MCF 10A (cell line): ENCODE measurements at regions of chr12 and their contacts with region 1.

Region 1: DNA sequence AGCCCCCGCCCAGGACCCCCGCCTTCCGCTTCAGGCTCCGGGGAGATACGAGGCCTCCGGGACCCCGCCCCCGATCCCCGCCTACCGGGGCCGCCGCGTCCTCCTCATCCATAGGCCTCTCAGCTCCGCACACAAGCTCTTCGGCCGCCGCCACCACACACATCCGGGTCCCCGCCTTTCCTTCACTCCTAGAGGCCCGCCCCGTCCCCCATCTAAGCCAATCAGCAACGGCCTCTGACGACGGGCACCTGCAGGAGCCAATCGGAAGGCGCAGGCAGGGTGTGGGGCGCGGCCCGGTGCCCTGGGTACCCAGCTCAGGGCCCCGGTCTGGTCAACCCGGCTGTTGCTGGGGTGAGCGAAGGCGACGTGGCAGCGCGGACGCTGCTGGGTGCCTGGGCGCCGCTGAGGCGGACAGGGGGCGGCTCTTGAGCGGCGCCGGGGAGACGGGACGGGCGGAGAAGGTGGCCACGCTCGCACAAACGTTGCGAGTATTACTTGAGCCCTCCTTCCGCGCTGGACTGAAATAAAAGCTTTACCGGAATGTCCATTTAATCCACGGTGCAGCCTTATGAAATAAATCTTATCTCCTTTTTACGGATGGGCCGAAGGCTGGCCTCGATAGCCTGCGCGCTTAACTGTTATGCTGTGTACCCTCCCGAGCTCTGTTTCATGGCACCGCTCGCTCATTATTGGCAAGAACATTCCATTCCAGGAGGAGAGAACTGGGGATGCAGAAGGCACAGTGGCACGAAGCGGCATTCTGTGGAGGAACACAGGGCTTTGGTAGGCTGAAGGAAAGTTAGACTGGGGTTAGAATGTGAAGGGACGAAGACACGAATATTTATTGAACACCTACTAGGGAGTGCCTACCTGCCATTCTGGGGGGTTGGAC is at the start of gene SPRYD3:
- DNase-seq: peak; percentile 97
- H3K4me3 Mint-ChIP-seq: peak within 1 kb of the TSS; percentile 73
- H3K27ac Mint-ChIP-seq: peak within 1 kb of the TSS; percentile 61
- H3K4me1 Mint-ChIP-seq: peaks cover 23% of the 10 kb centered on the region
- H3K27me3 Mint-ChIP-seq: no peaks in the 10 kb centered on the region
- CTCF ChIP-seq: no peak
- total RNA-seq, gene SPRYD3: 35.2 and 39.9 TPM in 2 replicates

Region 2: GRCh38 chr12:52949413-52950331 is 129.8 kb before region 1 on chr12:
- CTCF ChIA-PET with region 1: no interaction called
- POLR2A ChIA-PET with region 1: no interaction called
- intact Hi-C with region 1: no loop called
- DNase-seq: peak; percentile 98
- H3K4me3 Mint-ChIP-seq: peak overlapping the region; percentile 95
- H3K27ac Mint-ChIP-seq: peak overlapping the region; percentile 86
- H3K4me1 Mint-ChIP-seq: peaks cover 57% of the 10 kb centered on the region
- H3K27me3 Mint-ChIP-seq: no peaks in the 10 kb centered on the region
- CTCF ChIP-seq: no peak

Region 3: DNA sequence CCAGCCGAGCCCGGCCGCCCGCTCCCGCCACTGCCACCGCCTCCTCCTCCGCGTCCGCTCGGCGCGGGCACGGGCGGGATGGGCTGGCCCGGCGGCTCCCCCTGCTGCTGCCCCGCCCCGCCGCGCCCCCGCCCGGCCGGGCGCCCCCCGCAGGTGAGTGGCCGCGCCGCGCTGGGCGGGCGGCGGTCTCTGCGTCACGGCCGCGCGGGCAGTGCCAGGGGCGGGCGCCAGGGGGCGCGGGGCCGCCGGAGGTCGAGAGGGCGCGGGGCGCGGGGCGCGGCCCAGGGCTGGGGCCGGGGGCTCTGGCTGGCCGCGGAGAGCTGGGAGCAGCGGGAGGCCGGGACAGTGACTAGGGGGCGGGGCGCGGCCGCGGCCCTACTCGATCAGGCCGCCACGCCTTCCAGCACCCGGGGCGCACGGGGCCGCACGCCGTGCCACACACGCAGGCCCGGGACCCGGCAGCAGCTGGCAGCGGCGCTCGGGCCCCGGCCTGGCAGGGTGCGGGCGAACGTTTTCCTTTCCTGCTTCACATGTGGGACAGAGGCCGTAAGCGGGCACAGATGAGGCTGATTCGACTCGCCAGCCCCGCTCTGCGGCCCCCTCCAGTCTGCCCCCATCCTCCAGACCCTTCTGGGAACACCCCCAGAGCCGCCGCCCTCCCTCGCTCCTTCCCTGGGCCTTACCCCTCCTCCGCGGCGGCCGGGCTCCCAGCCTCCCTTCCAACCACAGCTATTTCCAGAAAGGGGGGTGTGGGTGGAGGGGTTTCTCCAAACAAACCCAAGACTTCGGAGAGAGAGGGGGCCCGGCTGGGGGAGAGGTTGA is 32.0 kb before region 1 on chr12:
- CTCF ChIA-PET with region 1: interaction called, 3 read pairs
- POLR2A ChIA-PET with region 1: interaction called, 19 read pairs
- intact Hi-C with region 1: no loop called
- DNase-seq: peak; percentile 64
- H3K4me3 Mint-ChIP-seq: peak overlapping the region; percentile 80
- H3K27ac Mint-ChIP-seq: peak overlapping the region; percentile 87
- H3K4me1 Mint-ChIP-seq: peaks cover 46% of the 10 kb centered on the region
- H3K27me3 Mint-ChIP-seq: no peaks in the 10 kb centered on the region
- CTCF ChIP-seq: peak; percentile 28

Region 4: GRCh38 chr12:53054112-53054833 is 25.2 kb before region 1 on chr12:
- CTCF ChIA-PET with region 1: interaction called, 3 read pairs
- POLR2A ChIA-PET with region 1: interaction called, 23 read pairs
- intact Hi-C with region 1: no loop called
- DNase-seq: peak; percentile 98
- H3K4me3 Mint-ChIP-seq: peak overlapping the region; percentile 80
- H3K27ac Mint-ChIP-seq: peak overlapping the region; percentile 97
- H3K4me1 Mint-ChIP-seq: peaks cover 32% of the 10 kb centered on the region
- H3K27me3 Mint-ChIP-seq: no peaks in the 10 kb centered on the region
- CTCF ChIP-seq: no peak

Region 5: GRCh38 chr12:53065975-53066931 is 13.2 kb before region 1 on chr12:
- CTCF ChIA-PET with region 1: interaction called, 85 read pairs
- POLR2A ChIA-PET with region 1: interaction called, 15 read pairs
- intact Hi-C with region 1: no loop called
- DNase-seq: peak; percentile 81
- H3K4me3 Mint-ChIP-seq: no peak overlapping the region
- H3K27ac Mint-ChIP-seq: no peak overlapping the region
- H3K4me1 Mint-ChIP-seq: peaks cover 11% of the 10 kb centered on the region
- H3K27me3 Mint-ChIP-seq: no peaks in the 10 kb centered on the region
- CTCF ChIP-seq: peak; percentile 78

Region 6: GRCh38 chr12:53090563-53090962 is 11.1 kb after region 1 on chr12:
- CTCF ChIA-PET with region 1: interaction called, 4 read pairs
- POLR2A ChIA-PET with region 1: interaction called, 11 read pairs
- intact Hi-C with region 1: no loop called
- DNase-seq: no peak
- H3K4me3 Mint-ChIP-seq: no peak overlapping the region
- H3K27ac Mint-ChIP-seq: no peak overlapping the region
- H3K4me1 Mint-ChIP-seq: no peaks in the 10 kb centered on the region
- H3K27me3 Mint-ChIP-seq: no peaks in the 10 kb centered on the region
- CTCF ChIP-seq: no peak

Region 7: DNA sequence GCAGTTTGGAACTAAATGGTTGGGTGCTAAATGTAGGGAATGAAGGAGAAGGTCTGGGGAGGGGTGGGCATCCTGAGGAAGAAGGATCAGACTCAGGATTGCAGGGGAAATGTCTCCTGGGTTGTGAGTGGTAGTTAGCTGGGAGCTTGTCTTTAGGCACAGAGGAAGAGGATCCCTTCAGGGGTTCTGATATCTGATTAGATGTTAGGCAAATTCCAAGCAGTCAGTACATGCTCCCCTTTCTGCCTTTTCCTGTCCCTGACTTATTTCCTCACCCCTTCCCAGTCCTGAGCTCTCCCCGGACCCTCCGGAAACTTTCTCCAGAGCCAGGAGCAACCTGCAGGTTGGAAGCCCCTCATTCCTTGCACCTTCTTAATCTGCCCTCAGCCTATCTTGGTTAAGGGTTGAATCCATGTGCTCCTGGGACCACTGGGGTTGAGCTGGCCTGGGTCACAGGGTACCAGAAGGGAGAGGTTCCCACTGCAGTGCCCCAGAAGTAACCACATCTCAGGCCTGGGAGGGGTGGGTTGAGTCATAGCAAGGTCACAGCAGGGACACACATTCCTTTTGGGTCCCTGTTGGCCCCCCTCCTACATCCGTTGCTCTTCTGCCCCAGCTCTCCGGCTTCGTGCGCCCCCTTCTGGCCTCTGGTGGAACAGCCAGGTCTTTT is 19.6 kb after region 1 on chr12:
- CTCF ChIA-PET with region 1: interaction called, 42 read pairs
- POLR2A ChIA-PET with region 1: interaction called, 55 read pairs
- intact Hi-C with region 1: loop called (anchors 1 kb)
- DNase-seq: peak; percentile 92
- H3K4me3 Mint-ChIP-seq: peak overlapping the region; percentile 73
- H3K27ac Mint-ChIP-seq: peak overlapping the region; percentile 76
- H3K4me1 Mint-ChIP-seq: peaks cover 26% of the 10 kb centered on the region
- H3K27me3 Mint-ChIP-seq: no peaks in the 10 kb centered on the region
- CTCF ChIP-seq: peak; percentile 92

Region 8: DNA sequence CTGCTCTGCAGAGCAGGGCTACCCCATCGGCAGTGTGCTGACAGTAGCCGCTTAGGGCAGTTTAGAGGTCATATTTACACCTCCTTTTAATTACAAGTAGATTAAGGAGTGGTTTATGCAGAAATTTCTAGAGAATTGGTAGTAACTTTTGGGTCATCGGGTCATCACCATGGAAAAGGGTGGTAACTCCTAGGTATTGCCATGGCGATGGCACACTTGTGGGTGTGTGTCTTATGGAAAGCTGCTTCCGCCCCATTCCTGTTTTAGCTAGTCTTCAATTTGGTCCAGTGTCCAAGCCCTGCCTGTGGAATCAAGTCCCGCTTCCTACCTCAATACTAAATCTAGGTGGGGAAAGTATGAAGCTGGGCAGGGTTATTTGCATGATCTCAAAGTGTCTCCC is 71.6 kb after region 1 on chr12:
- CTCF ChIA-PET with region 1: no interaction called
- POLR2A ChIA-PET with region 1: no interaction called
- intact Hi-C with region 1: no loop called
- DNase-seq: no peak
- H3K4me3 Mint-ChIP-seq: no peak overlapping the region
- H3K27ac Mint-ChIP-seq: no peak overlapping the region
- H3K4me1 Mint-ChIP-seq: no peaks in the 10 kb centered on the region
- H3K27me3 Mint-ChIP-seq: no peaks in the 10 kb centered on the region
- CTCF ChIP-seq: no peak

Region 9: DNA sequence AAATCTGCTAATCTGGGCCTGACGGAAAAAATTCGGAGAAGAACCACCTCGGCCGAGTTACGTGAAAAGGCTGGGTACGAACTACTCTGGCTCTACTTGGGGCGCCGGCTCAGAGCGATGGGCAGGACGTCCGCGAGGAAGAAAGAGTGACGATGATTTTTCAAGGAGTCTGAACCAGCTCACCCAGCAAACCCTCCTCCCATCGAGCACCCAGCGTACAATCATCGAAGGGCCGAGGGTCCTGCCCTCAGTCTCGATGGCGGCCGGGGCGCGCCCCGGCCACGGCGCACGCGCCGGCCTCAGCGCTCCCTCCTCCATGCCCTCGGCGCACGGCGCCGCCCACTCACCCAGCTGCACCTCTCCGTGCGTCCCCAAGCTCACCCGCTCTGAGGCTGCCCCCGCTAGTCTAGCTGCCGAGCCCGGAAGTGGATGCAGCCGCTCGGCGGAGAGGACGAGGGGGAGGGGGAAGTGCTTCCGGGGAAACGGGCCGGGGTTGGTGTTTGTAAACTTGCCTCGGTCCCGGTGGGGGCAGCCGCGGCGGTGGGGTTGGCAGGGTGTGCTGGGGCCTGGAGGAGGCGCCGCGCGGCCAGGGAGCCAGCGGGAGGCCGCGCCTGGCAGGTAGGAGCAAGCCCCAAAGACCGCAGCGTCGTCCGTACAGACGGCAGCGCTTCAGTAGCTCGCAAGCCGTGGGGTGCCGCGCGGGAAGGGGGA is 100.9 kb after region 1 on chr12 and contains the starts of genes CSAD and ZNF740:
- CTCF ChIA-PET with region 1: no interaction called
- POLR2A ChIA-PET with region 1: interaction called, 16 read pairs
- intact Hi-C with region 1: no loop called
- DNase-seq: peak; percentile 96
- H3K4me3 Mint-ChIP-seq: peak within 1 kb of the TSS; percentile 95
- H3K27ac Mint-ChIP-seq: peak within 1 kb of the TSS; percentile 94
- H3K4me1 Mint-ChIP-seq: peaks cover 29% of the 10 kb centered on the region
- H3K27me3 Mint-ChIP-seq: no peaks in the 10 kb centered on the region
- CTCF ChIP-seq: no peak
- total RNA-seq, gene CSAD: 22.7 and 30.8 TPM in 2 replicates
- total RNA-seq, gene ZNF740: 34.9 and 36.2 TPM in 2 replicates